ENCODE measurements at regions of chr7 and their contacts with region 1.

Region 1: DNA sequence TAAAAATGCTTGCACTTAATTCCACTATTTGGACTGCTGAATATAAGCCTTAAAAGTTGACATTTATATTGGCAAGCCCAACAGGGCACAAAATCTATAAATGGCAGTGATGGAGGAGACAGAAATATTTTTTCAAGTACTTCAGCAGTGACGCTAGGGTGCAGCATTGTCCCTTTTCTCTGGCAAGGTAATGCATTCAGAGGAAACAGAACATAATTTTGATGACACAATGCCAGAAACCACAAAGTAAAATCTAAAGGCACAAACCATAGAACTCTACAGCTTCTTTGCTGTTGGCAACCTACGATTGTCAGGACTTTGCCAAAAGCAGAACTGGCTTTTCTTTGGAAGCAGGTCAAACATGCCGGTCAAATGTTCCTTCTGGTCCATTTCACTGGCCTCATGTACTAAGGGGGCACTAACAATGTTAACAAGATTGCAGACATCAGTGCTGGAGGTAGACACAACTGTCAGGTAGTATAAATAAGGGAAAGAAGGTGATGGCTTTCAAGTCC is 30.9 kb upstream of the FAM133B start:
- DNase-seq: peak; percentile 83
- H3K4me3 Mint-ChIP-seq: peak overlapping the region; percentile 43
- H3K27ac Mint-ChIP-seq: peak overlapping the region; percentile 89
- H3K4me1 Mint-ChIP-seq: peaks cover 60% of the 10 kb centered on the region
- H3K27me3 Mint-ChIP-seq: no peaks in the 10 kb centered on the region

Region 2: DNA sequence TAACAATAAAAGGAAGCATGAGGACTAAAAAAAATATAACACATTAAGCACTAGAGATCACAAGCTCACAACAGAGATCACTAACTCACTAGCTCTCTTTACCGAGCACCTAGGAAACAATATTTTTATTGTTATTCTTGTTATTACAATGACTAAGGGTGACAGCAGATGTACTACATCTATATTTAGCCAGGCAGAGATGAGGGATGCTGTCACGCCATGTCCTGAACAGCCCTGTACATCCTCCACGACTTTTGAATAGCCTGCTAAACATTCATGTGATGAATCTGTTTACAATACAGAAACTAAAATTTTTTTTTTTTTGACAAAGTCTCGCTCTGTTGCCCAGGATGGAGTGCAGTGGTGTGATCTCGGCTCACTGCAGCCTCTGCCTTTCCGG is 53.6 kb before region 1 on chr7:
- CTCF ChIA-PET with region 1: no interaction called
- POLR2A ChIA-PET with region 1: no interaction called
- DNase-seq: no peak
- H3K4me3 Mint-ChIP-seq: no peak overlapping the region
- H3K27ac Mint-ChIP-seq: no peak overlapping the region
- H3K4me1 Mint-ChIP-seq: peaks cover 2% of the 10 kb centered on the region
- H3K27me3 Mint-ChIP-seq: no peaks in the 10 kb centered on the region

Region 3: GRCh38 chr7:92598310-92598981 is 22.6 kb before region 1 on chr7:
- CTCF ChIA-PET with region 1: no interaction called
- POLR2A ChIA-PET with region 1: no interaction called
- DNase-seq: no peak
- H3K4me3 Mint-ChIP-seq: no peak overlapping the region
- H3K27ac Mint-ChIP-seq: no peak overlapping the region
- H3K4me1 Mint-ChIP-seq: no peaks in the 10 kb centered on the region
- H3K27me3 Mint-ChIP-seq: no peaks in the 10 kb centered on the region

Region 4: GRCh38 chr7:92609921-92610518 is 11.1 kb before region 1 on chr7:
- CTCF ChIA-PET with region 1: interaction called, 41 read pairs
- POLR2A ChIA-PET with region 1: interaction called, 10 read pairs
- DNase-seq: no peak
- H3K4me3 Mint-ChIP-seq: no peak overlapping the region
- H3K27ac Mint-ChIP-seq: peak overlapping the region; percentile 68
- H3K4me1 Mint-ChIP-seq: peaks cover 46% of the 10 kb centered on the region
- H3K27me3 Mint-ChIP-seq: no peaks in the 10 kb centered on the region

Region 5: DNA sequence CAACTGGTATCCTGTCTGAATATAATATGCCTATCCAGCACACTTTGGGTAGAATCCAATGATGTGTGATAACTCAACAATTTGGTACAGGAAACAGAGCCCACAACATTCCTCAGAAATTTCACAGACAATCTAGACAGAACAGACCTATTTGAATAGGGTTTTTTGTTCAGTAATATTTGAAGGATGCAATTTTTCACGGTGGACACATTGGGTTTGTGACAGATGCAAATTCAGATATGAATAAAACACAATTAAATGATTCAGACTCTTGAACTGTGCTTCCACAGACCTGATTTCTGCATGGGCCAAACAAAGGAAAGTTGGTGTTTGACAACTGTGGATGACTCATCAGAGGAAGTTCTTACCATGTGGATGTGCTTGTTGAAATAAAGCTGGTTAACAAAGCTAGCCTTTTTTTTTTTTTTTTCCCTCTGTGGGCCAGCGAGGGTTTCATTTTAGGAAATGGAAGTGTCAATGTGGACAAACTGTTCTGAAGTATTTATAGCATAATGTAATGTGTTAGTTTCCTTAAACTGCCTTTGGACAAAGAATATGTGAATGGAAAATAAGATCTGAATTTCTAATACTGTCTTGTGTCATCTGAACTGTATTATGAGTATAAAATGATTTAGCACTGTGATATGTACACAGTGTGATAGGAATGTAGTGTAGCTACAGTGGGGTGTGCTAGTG is 12.3 kb after region 1 on chr7:
- CTCF ChIA-PET with region 1: interaction called, 10 read pairs
- POLR2A ChIA-PET with region 1: interaction called, 23 read pairs
- DNase-seq: no peak
- H3K4me3 Mint-ChIP-seq: peak overlapping the region; percentile 16
- H3K27ac Mint-ChIP-seq: peak overlapping the region; percentile 80
- H3K4me1 Mint-ChIP-seq: peaks cover 78% of the 10 kb centered on the region
- H3K27me3 Mint-ChIP-seq: no peaks in the 10 kb centered on the region

Region 6: DNA sequence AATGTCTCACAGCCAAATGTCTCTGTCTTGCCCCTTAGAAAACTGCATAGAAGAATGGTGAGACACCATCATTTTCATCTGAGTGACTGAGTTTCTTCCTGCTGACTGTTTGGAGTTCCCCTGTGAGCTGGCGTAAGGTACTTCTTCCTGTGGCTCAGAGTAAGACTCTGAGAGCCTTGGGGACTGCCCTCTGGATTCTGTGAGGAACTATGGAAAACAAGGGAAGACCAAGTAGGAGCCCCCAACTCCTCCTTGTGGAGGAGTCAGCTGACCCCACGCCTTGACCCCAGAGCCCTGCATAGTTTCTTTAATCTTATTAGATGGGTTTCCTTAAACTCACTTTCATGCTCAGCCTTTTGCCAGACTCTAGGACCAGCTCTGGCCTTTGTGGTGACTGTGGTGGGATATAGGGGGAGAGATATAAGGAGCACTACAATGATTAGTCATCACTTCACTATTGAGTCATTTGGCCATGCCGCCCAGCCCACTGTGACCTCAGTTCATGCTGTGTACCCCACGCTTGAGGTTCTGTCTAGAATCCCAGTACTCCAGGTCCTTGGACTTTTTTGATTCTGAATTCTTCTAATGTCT is 20.9 kb after region 1 on chr7:
- CTCF ChIA-PET with region 1: interaction called, 5 read pairs
- POLR2A ChIA-PET with region 1: interaction called, 17 read pairs
- DNase-seq: peak; percentile 72
- H3K4me3 Mint-ChIP-seq: peak overlapping the region; percentile 18
- H3K27ac Mint-ChIP-seq: peak overlapping the region; percentile 91
- H3K4me1 Mint-ChIP-seq: peaks cover 88% of the 10 kb centered on the region
- H3K27me3 Mint-ChIP-seq: no peaks in the 10 kb centered on the region

Region 7: DNA sequence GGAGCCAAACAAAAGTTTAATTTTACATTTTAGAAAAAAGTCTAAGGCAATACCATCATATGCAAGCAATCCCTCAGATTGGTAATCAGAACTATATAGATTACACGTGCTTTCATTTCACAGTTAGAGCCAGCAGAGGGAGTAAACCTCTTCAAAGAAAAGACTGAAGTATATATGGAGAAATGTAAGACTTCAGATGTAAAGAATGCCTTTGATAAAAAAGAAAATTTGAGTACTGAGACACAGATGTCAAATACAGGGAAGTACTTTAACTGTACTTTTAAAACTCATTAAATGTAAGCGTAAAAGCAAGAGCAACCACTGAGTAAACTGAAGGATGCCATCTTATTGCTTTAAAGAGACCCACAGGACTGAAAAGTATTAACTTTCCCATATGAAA is 70.5 kb after region 1 on chr7:
- CTCF ChIA-PET with region 1: interaction called, 11 read pairs
- POLR2A ChIA-PET with region 1: interaction called, 6 read pairs
- DNase-seq: no peak
- H3K4me3 Mint-ChIP-seq: no peak overlapping the region
- H3K27ac Mint-ChIP-seq: peak overlapping the region; percentile 61
- H3K4me1 Mint-ChIP-seq: peaks cover 56% of the 10 kb centered on the region
- H3K27me3 Mint-ChIP-seq: no peaks in the 10 kb centered on the region

Region 8: DNA sequence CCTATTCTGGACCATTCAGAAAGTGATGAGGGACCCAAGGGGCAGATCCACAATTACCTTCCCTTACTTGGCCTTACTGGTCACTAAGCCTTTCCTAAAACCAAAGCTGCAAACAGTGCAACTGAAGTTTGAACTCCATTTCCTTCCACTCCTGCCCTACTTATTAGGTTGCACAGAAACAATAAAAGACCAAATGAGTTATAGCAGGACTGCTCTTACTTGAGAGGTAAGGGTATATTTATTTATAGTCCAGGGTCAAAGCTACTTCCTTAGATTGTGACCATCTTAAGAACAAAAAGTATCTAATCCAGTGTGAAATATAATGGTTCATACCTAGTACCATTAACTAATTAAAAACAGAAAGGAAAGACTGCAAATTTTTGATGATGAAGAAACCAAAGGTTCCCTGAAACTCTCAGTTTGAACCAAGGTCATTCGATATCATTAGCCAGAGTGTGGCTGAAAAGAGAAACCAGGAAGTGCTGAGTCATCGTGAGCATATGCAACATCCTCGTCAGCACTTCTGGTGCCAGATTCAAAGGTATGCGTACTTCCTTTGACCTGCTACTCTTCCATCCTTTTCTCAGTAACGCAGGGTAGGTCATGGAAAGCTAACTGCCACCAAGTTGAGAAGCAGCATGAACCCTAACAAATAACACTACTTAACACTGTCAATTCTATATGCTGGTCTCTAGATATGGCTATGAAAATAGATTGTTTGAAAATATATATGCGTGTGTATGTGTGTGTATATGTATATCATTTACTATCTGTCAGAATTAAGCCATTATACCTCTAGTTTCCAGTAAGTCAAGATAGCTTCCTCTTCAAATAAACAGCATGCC is 188.5 kb after region 1 on chr7:
- CTCF ChIA-PET with region 1: interaction called, 10 read pairs
- POLR2A ChIA-PET with region 1: interaction called, 7 read pairs
- DNase-seq: peak; percentile 83
- H3K4me3 Mint-ChIP-seq: peak overlapping the region; percentile 65
- H3K27ac Mint-ChIP-seq: peak overlapping the region; percentile 95
- H3K4me1 Mint-ChIP-seq: peaks cover 85% of the 10 kb centered on the region
- H3K27me3 Mint-ChIP-seq: no peaks in the 10 kb centered on the region

Measured in activated CD4-positive, alpha-beta memory T cell treated with anti-CD3 and anti-CD28 coated beads, Interleukin-2, amount 10 ng/mL, durations not matched to agents 7 days and 5 days (primary cell).